ENCODE measurements at regions of chr14 and their contacts with region 1.

Region 1: DNA sequence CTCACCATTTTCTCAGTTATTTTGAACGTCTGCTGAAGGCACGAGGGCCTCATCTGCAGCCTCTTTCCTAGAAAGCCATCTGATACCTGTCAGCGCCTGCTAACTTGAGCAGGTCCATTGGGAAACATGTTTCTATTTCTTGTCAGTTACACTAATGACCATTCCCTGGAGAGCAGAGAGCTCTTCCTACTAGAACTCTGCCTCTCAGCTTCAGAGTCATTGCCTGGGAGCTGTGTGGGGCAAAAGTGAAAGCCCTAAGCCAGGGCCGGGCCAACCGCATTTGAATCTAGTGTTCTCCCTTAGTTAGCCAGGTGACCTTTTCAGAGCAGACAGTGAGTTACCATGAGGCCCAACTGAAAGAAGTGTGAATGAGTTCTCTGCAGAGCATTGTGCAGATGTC is 135.8 kb downstream of the EML1 start:
- DNase-seq: no peak
- ATAC-seq: no peak
- H3K4me3 ChIP-seq: no peak overlapping the region
- H3K27ac ChIP-seq: no peak overlapping the region
- H3K4me1 ChIP-seq: peaks cover 0 to 28% (median 5%) of the 10 kb centered on the region in 4 donors
- H3K27me3 ChIP-seq: no peaks in the 10 kb centered on the region
- CTCF ChIP-seq: no peak
- POLR2A ChIP-seq: no peak

Region 2: GRCh38 chr14:99809360-99809759 is 119.6 kb before region 1 on chr14:
- intact Hi-C with region 1: no loop called
- DNase-seq: no peak
- ATAC-seq: peak in 1 of 4 donors; percentile 22
- H3K4me3 ChIP-seq: no peak overlapping the region
- H3K27ac ChIP-seq: no peak overlapping the region
- H3K4me1 ChIP-seq: no peaks in the 10 kb centered on the region
- H3K27me3 ChIP-seq: no peaks in the 10 kb centered on the region
- CTCF ChIP-seq: no peak
- POLR2A ChIP-seq: no peak

Region 3: GRCh38 chr14:100004392-100004791 is 75.4 kb after region 1 on chr14:
- intact Hi-C with region 1: loop called in 1 of 2 experiments (anchors 10 kb)
- DNase-seq: no peak
- ATAC-seq: no peak
- H3K4me3 ChIP-seq: no peak overlapping the region
- H3K27ac ChIP-seq: no peak overlapping the region
- H3K4me1 ChIP-seq: peaks cover 0 to 8% (median 4%) of the 10 kb centered on the region in 4 donors
- H3K27me3 ChIP-seq: no peaks in the 10 kb centered on the region
- CTCF ChIP-seq: no peak
- POLR2A ChIP-seq: no peak

Region 4: GRCh38 chr14:100108042-100108825 is 179.3 kb after region 1 on chr14:
- intact Hi-C with region 1: no loop called
- DNase-seq: peak; percentile 77 to 81 (median 80)
- ATAC-seq: peak; percentile 76 to 88 (median 82)
- H3K4me3 ChIP-seq: no peak overlapping the region
- H3K27ac ChIP-seq: no peak overlapping the region
- H3K4me1 ChIP-seq: peaks cover 0 to 27% (median 0%) of the 10 kb centered on the region in 4 donors
- H3K27me3 ChIP-seq: no peaks in the 10 kb centered on the region
- CTCF ChIP-seq: peak; percentile 77 to 87 (median 84)
- POLR2A ChIP-seq: no peak

Measured in right lobe of liver (tissue), 6 donors.